Left cardiac atrium (tissue), 4 donors: ENCODE measurements at regions of chr1 and their contacts with region 1.

Region 1: GRCh38 chr1:170881268-170882265 is 53.8 kb upstream of the MROH9 start:
- DNase-seq: no peak
- ATAC-seq: peak; percentile 42 to 78

Region 2: DNA sequence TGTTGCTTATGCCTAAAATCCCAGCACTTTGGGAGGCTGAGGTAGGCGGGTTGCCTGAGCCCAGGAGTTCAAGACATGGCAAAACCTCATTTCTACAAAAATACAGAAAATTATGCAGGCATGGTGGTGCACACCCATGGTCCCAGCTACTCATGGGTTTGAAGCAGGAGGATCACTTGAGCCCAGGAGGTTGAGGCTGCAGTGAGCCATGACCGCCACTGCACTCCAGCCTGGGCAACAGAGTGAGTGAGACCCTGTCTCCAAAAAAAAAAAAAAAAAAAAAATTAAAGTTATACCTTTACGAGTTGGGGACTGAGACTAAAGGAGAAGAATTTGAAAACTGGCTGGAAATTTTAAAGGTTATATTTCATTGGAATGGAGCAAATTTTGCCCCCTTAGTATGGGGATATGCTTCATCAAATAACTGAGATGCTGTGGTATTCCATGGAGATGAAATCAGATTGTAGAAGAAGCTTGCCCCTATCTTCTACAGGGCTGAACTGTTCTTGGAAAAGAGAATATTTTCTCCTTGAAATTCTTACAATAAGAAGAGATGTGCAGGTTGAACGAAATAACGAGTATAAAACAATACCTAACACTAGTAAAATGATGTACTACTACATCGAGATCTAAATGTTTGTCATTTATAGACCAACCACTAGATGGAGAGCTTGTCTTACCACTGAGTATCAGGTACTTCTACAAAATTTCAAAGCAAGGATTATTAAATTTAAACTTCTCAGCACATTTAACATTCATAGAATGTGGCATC is 952.9 kb before region 1 on chr1:
- intact Hi-C with region 1: loop called in 1 of 2 experiments (anchors 10 kb)
- DNase-seq: no peak
- ATAC-seq: peak in 1 of 2 donors; percentile 53